ENCODE measurements at regions of chr5 and their contacts with region 1.

Region 1: DNA sequence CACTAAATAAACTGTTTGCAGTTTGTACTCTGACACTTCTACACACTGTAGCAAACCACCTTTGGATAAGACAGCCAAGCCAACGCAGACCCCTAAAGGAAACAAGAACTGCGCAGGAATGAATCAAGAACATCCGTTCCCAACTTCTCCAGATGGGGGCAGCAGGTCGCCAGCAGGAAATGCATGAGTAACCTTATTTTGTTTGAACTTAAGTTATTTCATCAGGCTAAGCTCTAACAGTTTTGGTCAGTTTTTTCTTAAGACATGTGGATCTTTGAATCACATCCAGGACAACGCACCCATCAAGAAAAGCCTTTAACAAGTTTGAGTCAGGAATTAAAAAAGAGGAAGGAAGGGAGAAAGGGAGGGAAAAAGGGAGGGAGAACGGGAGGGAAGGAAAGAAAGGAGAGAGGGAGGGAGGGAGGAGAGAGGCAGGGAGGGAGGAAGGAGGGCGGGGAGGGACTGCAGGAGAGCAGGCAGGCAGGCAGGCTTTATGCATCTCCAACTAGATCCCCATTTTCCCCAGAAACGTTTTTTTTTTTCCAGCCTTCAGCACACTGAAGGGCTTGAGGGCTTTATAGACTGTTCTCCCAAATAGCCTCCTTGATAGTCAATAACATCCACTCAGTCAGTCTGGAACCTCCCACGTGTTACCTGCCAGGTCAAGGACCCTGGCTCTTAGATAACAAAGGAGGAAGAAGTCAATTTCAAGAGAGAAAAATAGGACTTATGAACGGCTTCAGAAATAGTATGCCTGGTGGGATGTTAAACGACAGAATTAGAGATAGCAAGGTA is 22.2 kb downstream of the BHMT start:
- DNase-seq: no peak
- H3K4me3 ChIP-seq: peak overlapping the region in 2 of 8 donors; percentile 10 to 47
- H3K27ac ChIP-seq: peak overlapping the region in 5 of 8 donors; percentile 8 to 20 (median 15)
- H3K4me1 ChIP-seq: peaks cover 7 to 19% (median 11%) of the 10 kb centered on the region in 6 donors
- H3K27me3 ChIP-seq: no peaks in the 10 kb centered on the region
- CTCF ChIP-seq: peak in 9 of 11 experiments; percentile 25 to 73 (median 49)
- POLR2A ChIP-seq: no peak

Region 2: DNA sequence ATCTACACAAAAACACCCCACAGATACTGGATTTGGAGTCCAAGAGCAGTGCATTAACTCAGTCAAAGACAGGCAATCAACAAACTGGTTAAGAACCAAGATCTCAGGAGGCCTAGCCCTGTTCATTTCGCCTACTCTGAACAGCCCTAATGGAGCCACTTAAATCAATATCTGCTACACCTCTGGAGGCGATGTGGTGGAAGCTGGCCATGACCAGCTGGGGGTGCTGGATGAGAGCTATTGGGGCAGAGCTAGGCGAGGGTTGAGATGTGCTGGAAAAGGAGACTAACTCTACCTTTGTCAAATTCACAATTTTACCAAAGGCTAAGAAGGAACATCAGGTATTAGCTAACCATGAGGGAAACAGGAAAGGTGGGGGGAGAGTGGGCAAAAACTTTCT is 125.5 kb before region 1 on chr5:
- intact Hi-C with region 1: no loop called
- DNase-seq: no peak
- H3K4me3 ChIP-seq: no peak overlapping the region
- H3K27ac ChIP-seq: no peak overlapping the region
- H3K4me1 ChIP-seq: no peaks in the 10 kb centered on the region
- H3K27me3 ChIP-seq: peaks cover 0 to 5% (median 0%) of the 10 kb centered on the region in 7 donors
- CTCF ChIP-seq: no peak
- POLR2A ChIP-seq: no peak

Region 3: GRCh38 chr5:79020861-79021561 is 112.8 kb before region 1 on chr5:
- intact Hi-C with region 1: loop called (anchors 5 kb)
- DNase-seq: no peak
- H3K4me3 ChIP-seq: peak overlapping the region in 1 of 8 donors; percentile 13
- H3K27ac ChIP-seq: no peak overlapping the region
- H3K4me1 ChIP-seq: peaks cover 0 to 14% (median 11%) of the 10 kb centered on the region in 6 donors
- H3K27me3 ChIP-seq: peaks cover 0 to 60% (median 12%) of the 10 kb centered on the region in 7 donors
- CTCF ChIP-seq: peak in 10 of 11 experiments; percentile 29 to 73 (median 54)
- POLR2A ChIP-seq: no peak

Measured in spleen (tissue), 13 donors.